Activated CD4-positive, alpha-beta memory T cell treated with anti-CD3 and anti-CD28 coated beads for 36 hours (primary cell): ENCODE measurements at regions of chr3 and their contacts with region 1.

Region 1: DNA sequence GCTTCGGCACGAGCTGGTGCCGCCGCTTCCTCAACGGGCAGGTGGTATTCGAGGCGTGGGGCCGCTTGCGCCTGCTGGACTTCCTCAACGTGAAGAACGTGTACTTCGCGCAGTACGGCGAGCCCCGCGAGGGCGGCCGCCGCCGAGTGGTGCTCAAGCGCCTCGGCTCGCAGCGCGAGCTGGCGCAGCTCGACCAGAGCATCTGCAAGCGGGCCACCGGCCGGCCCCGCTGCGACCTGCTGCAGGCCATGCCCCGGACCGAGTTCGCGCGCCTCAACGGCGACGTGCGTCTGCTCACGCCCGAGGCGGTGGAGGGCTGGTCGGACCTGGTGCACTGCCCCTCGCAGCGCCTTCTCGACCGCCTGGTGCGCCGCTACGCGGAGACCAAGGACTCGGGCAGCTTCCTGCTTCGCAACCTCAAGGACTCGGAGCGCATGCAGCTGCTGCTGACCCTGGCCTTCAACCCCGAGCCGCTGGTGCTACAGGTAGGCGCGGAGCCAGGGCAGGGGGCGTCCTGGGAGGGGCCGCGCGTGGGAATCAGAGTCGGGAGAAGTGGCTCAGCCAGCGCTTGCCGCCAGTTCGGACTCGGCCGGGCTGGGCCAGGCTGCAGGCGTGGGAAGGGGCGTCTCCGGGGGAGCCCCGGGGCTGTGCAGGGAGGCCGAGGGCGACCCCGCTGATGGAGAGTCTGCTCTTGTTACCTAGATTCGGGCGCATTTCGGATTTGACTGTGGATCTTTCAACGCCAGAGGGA is 1.1 kb downstream of the DIPK2A start:
- DNase-seq: peak; percentile 73
- H3K4me3 Mint-ChIP-seq: peak overlapping the region; percentile 92
- H3K27ac Mint-ChIP-seq: peak overlapping the region; percentile 96
- H3K4me1 Mint-ChIP-seq: peaks cover 22% of the 10 kb centered on the region
- H3K27me3 Mint-ChIP-seq: peaks cover 4% of the 10 kb centered on the region

Region 2: GRCh38 chr3:143001369-143002082 is 971.2 kb before region 1 on chr3 and contains the start of gene U2SURP:
- CTCF ChIA-PET with region 1: interaction called, 4 read pairs
- POLR2A ChIA-PET with region 1: interaction called, 3 read pairs
- intact Hi-C with region 1: loop called (anchors 1 kb)
- DNase-seq: peak; percentile 95
- H3K4me3 Mint-ChIP-seq: peak within 1 kb of the TSS; percentile 88
- H3K27ac Mint-ChIP-seq: peak within 1 kb of the TSS; percentile 96
- H3K4me1 Mint-ChIP-seq: peaks cover 34% of the 10 kb centered on the region
- H3K27me3 Mint-ChIP-seq: no peaks in the 10 kb centered on the region
- total RNA-seq, gene U2SURP: 178 to 182 TPM

Region 3: GRCh38 chr3:143171141-143171970 is 801.3 kb before region 1 on chr3:
- CTCF ChIA-PET with region 1: no interaction called
- POLR2A ChIA-PET with region 1: no interaction called
- intact Hi-C with region 1: loop called (anchors 5 kb)
- DNase-seq: no peak
- H3K4me3 Mint-ChIP-seq: no peak overlapping the region
- H3K27ac Mint-ChIP-seq: peak overlapping the region; percentile 78
- H3K4me1 Mint-ChIP-seq: peaks cover 45% of the 10 kb centered on the region
- H3K27me3 Mint-ChIP-seq: no peaks in the 10 kb centered on the region

Region 4: GRCh38 chr3:143775459-143775858 is 197.2 kb before region 1 on chr3:
- CTCF ChIA-PET with region 1: interaction called, 24 read pairs
- POLR2A ChIA-PET with region 1: no interaction called
- intact Hi-C with region 1: loop called (anchors 1 kb)
- DNase-seq: no peak
- H3K4me3 Mint-ChIP-seq: no peak overlapping the region
- H3K27ac Mint-ChIP-seq: no peak overlapping the region
- H3K4me1 Mint-ChIP-seq: peaks cover 3% of the 10 kb centered on the region
- H3K27me3 Mint-ChIP-seq: no peaks in the 10 kb centered on the region

Region 5: DNA sequence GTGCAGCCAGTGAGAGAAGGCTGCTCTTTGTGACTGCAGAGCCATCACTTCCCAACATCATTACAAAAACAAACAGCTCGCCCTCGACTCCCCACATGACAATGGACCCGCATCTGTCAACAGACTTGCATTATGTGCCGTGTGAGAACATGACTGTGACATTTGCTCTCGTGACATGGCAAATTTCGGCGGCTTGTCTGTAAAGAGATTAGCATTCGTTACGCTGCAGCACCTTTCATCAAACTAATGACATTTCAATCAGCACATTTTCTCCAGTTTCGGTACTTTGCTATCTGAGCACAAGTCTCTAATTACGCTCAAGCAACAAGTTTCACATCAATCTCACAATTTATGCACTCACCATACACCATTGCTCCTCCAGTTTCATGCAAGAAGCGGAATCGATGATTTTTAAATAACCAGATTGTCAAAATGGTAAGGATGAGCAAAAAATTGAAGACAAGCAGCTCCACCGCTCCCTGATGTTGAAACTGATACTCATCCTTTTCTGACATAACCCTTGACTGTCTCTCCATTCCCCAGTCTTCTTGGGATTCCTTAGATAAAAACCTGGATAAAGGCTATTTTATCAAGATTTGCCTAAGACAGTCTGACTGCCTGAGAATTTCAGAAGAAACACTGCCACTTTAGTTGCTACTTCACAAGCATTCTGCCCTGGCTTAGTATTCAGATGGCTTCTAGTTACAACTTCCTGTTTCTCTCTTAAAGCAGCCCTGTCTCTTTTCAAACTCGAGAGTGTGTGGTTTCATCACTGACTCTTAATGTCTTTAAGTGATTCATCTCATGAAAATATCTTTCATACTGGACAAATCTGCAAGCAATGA is 124.7 kb before region 1 on chr3 and contains the start of gene SLC9A9:
- CTCF ChIA-PET with region 1: interaction called, 6 read pairs
- POLR2A ChIA-PET with region 1: interaction called, 21 read pairs
- intact Hi-C with region 1: loop called (anchors 1 kb)
- DNase-seq: peak; percentile 57
- H3K4me3 Mint-ChIP-seq: peak within 1 kb of the TSS; percentile 92
- H3K27ac Mint-ChIP-seq: peak within 1 kb of the TSS; percentile 90
- H3K4me1 Mint-ChIP-seq: peaks cover 52% of the 10 kb centered on the region
- H3K27me3 Mint-ChIP-seq: no peaks in the 10 kb centered on the region
- total RNA-seq, gene SLC9A9: 1.3 to 1.6 TPM

Region 6: GRCh38 chr3:144142151-144142840 is 169.6 kb after region 1 on chr3:
- CTCF ChIA-PET with region 1: no interaction called
- POLR2A ChIA-PET with region 1: no interaction called
- intact Hi-C with region 1: no loop called
- DNase-seq: no peak
- H3K4me3 Mint-ChIP-seq: no peak overlapping the region
- H3K27ac Mint-ChIP-seq: no peak overlapping the region
- H3K4me1 Mint-ChIP-seq: no peaks in the 10 kb centered on the region
- H3K27me3 Mint-ChIP-seq: no peaks in the 10 kb centered on the region

Region 7: DNA sequence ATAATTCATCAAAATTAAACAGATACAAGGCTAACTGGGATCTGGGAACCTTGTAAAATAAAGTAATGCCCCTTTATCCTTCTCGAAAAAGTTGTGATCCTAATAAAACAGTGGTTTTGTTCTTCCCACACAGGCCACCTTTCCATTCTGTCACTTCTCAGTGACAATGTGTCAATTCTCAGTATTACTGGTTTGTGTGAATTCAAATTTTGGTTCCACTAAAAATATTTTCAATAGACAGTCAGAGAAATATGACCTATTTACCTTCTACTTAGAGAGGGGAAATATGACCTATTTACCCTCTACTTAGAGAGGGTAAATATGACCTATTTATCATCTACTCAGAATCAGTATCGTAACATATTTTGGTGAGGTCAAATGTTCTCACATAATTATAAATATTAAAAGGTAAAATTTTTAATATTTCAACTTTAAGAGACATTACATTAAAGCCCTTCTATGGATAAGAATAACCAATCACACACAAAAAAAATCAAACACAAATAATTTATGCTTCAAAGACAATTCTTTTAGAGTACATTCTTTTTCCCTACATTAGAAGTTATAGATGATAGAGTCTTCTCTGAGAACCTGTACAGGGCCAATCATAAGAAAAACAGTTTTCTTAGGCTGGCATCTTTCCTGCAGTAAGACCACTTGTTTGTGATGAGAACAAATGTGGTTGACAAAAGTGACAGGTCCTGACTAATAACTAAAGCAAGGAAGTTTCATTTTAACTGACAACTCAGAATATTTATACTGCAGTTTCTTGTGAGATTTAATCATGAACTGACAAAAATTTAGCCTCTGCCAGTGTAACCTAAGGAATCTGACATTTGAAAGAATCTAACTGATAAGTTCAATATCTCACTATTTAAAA is 322.2 kb after region 1 on chr3:
- CTCF ChIA-PET with region 1: no interaction called
- POLR2A ChIA-PET with region 1: no interaction called
- intact Hi-C with region 1: loop called (anchors 10 kb)
- DNase-seq: no peak
- H3K4me3 Mint-ChIP-seq: no peak overlapping the region
- H3K27ac Mint-ChIP-seq: no peak overlapping the region
- H3K4me1 Mint-ChIP-seq: peaks cover 3% of the 10 kb centered on the region
- H3K27me3 Mint-ChIP-seq: no peaks in the 10 kb centered on the region